Caco-2 (cell line): ENCODE measurements at regions of chr11 and their contacts with region 1.

Region 1: GRCh38 chr11:112219476-112220232 is 6.6 kb upstream of the PTS start:
- DNase-seq: peak; percentile 60 to 78
- H3K4me3 ChIP-seq: no peak overlapping the region
- H3K4me3 Mint-ChIP-seq: no peak overlapping the region
- H3K27ac Mint-ChIP-seq: no peak overlapping the region
- H3K4me1 ChIP-seq: peaks cover 26% of the 10 kb centered on the region
- H3K4me1 Mint-ChIP-seq: peaks cover 15% of the 10 kb centered on the region
- H3K27me3 ChIP-seq: no peaks in the 10 kb centered on the region
- H3K27me3 Mint-ChIP-seq: no peaks in the 10 kb centered on the region
- CTCF ChIP-seq: peak; percentile 71 to 98

Region 2: GRCh38 chr11:112113539-112114457 is 105.9 kb before region 1 on chr11:
- CTCF ChIA-PET with region 1: interaction called, 3 read pairs
- POLR2A ChIA-PET with region 1: no interaction called
- intact Hi-C with region 1: loop called (anchors 2 kb)
- DNase-seq: peak in 1 of 2 experiments; percentile 66
- H3K4me3 ChIP-seq: no peak overlapping the region
- H3K4me3 Mint-ChIP-seq: no peak overlapping the region
- H3K27ac Mint-ChIP-seq: no peak overlapping the region
- H3K4me1 ChIP-seq: no peaks in the 10 kb centered on the region
- H3K4me1 Mint-ChIP-seq: no peaks in the 10 kb centered on the region
- H3K27me3 ChIP-seq: no peaks in the 10 kb centered on the region
- H3K27me3 Mint-ChIP-seq: no peaks in the 10 kb centered on the region
- CTCF ChIP-seq: peak; percentile 88 to 92

Region 3: GRCh38 chr11:112453601-112454577 is 234.2 kb after region 1 on chr11:
- CTCF ChIA-PET with region 1: no interaction called
- POLR2A ChIA-PET with region 1: no interaction called
- intact Hi-C with region 1: loop called (anchors 10 kb)
- DNase-seq: peak; percentile 49 to 67
- H3K4me3 ChIP-seq: no peak overlapping the region
- H3K4me3 Mint-ChIP-seq: no peak overlapping the region
- H3K27ac Mint-ChIP-seq: no peak overlapping the region
- H3K4me1 ChIP-seq: no peaks in the 10 kb centered on the region
- H3K4me1 Mint-ChIP-seq: peaks cover 5% of the 10 kb centered on the region
- H3K27me3 ChIP-seq: no peaks in the 10 kb centered on the region
- H3K27me3 Mint-ChIP-seq: peaks cover 22% of the 10 kb centered on the region
- CTCF ChIP-seq: peak; percentile 52 to 67

Region 4: GRCh38 chr11:112555491-112556364 is 336.1 kb after region 1 on chr11:
- CTCF ChIA-PET with region 1: no interaction called
- POLR2A ChIA-PET with region 1: no interaction called
- intact Hi-C with region 1: loop called (anchors 1 kb)
- DNase-seq: peak; percentile 68 to 84
- H3K4me3 ChIP-seq: no peak overlapping the region
- H3K4me3 Mint-ChIP-seq: no peak overlapping the region
- H3K27ac Mint-ChIP-seq: no peak overlapping the region
- H3K4me1 ChIP-seq: no peaks in the 10 kb centered on the region
- H3K4me1 Mint-ChIP-seq: no peaks in the 10 kb centered on the region
- H3K27me3 ChIP-seq: no peaks in the 10 kb centered on the region
- H3K27me3 Mint-ChIP-seq: peaks cover 21% of the 10 kb centered on the region
- CTCF ChIP-seq: peak; percentile 86 to 97

Region 5: DNA sequence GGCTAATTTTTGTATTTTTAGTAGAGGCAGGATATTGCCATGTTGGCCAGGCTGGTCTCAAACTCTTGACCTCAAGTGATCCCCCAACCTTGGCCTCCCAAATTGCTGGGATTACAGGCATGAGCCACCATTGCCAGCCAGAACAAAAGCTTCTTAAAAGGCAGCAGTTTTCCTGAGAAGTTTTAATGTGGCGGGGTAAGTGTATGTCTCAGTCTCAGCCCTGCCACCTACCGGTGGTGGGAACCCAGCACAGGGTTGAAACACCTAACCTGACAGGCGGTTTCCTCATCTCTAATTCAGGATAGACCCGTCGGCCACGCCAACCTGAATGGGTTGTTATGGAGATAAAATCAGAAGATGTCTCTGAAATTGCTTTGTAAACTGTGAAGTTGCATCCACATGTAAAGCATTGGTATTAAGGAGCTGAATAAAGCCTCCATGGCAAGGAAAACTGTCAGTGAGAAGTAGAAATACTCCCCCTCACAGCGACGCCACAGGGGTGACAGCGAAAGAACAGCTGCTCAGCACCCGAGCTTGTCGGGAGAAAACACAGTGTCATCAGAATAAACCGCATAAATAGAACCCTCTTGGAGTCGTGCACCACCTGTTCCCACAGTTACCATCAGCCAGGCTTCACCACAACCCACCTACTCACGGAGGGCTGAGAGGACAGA is 575.6 kb after region 1 on chr11:
- CTCF ChIA-PET with region 1: no interaction called
- POLR2A ChIA-PET with region 1: no interaction called
- intact Hi-C with region 1: loop called (anchors 5 kb)
- DNase-seq: peak; percentile 66 to 76
- H3K4me3 ChIP-seq: no peak overlapping the region
- H3K4me3 Mint-ChIP-seq: no peak overlapping the region
- H3K27ac Mint-ChIP-seq: no peak overlapping the region
- H3K4me1 ChIP-seq: no peaks in the 10 kb centered on the region
- H3K4me1 Mint-ChIP-seq: no peaks in the 10 kb centered on the region
- H3K27me3 ChIP-seq: peaks cover 2% of the 10 kb centered on the region
- H3K27me3 Mint-ChIP-seq: peaks cover 19% of the 10 kb centered on the region
- CTCF ChIP-seq: peak; percentile 89

Region 6: GRCh38 chr11:113113801-113114706 is 894.4 kb after region 1 on chr11:
- CTCF ChIA-PET with region 1: no interaction called
- POLR2A ChIA-PET with region 1: no interaction called
- intact Hi-C with region 1: loop called (anchors 1 kb)
- DNase-seq: peak; percentile 71
- H3K4me3 ChIP-seq: no peak overlapping the region
- H3K4me3 Mint-ChIP-seq: no peak overlapping the region
- H3K27ac Mint-ChIP-seq: no peak overlapping the region
- H3K4me1 ChIP-seq: no peaks in the 10 kb centered on the region
- H3K4me1 Mint-ChIP-seq: no peaks in the 10 kb centered on the region
- H3K27me3 ChIP-seq: 0 out of 2 replicates have a peak, but pooled peaks cover 1% of the 10 kb centered on the region
- H3K27me3 Mint-ChIP-seq: peaks cover 27% of the 10 kb centered on the region
- CTCF ChIP-seq: peak; percentile 86 to 98

Region 7: GRCh38 chr11:113289431-113290187 is 1070.0 kb after region 1 on chr11:
- CTCF ChIA-PET with region 1: no interaction called
- POLR2A ChIA-PET with region 1: no interaction called
- intact Hi-C with region 1: loop called (anchors 5 kb)
- DNase-seq: peak; percentile 70 to 82
- H3K4me3 ChIP-seq: no peak overlapping the region
- H3K4me3 Mint-ChIP-seq: no peak overlapping the region
- H3K27ac Mint-ChIP-seq: no peak overlapping the region
- H3K4me1 ChIP-seq: peaks cover 15% of the 10 kb centered on the region
- H3K4me1 Mint-ChIP-seq: peaks cover 26% of the 10 kb centered on the region
- H3K27me3 ChIP-seq: no peaks in the 10 kb centered on the region
- H3K27me3 Mint-ChIP-seq: peaks cover 2% of the 10 kb centered on the region
- CTCF ChIP-seq: peak; percentile 95 to 99